ENCODE measurements at regions of chr11 and their contacts with region 1.

Region 1: GRCh38 chr11:44911029-44911814 is 39.5 kb downstream of the TP53I11 start:
- DNase-seq: peak; percentile 87
- ATAC-seq: peak; percentile 89
- H3K4me3 Mint-ChIP-seq: no peak overlapping the region
- H3K27ac Mint-ChIP-seq: no peak overlapping the region
- H3K4me1 Mint-ChIP-seq: peaks cover 3% of the 10 kb centered on the region
- H3K27me3 Mint-ChIP-seq: peaks cover 6% of the 10 kb centered on the region

Region 2: DNA sequence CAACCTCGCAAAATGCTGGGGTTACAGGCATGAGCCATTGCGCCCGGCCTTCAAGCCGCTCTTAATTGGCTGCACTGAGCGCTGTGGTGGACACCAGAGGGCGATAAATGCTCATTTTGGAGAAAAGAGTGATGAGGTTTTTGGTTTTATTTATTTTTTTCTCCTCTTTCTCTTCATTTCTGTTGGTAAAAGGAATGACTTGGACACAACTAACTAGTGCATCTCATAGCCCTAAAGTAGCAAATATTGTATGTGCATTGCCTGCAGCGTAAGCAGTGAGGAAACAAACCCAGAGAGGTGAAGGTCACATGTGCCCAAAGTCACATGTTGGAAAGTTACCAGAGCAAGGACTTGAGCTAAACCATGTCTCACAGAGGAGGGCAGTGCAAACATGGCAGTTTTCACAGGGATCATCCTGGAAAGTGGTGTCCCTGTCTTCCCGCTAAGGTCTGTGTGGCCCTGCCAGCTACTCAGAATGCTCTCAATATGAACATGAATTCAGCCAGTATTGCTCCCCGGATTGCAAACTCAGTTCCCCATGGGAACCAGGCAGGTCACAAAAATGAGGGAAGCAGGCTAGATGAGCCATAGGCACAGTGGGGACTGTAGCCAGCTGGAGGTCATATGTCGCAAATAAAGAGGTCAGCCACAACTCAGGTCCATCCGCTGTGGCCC is 354.4 kb before region 1 on chr11:
- CTCF ChIA-PET with region 1: interaction called, 12 read pairs
- DNase-seq: peak; percentile 80
- ATAC-seq: peak; percentile 65
- H3K4me3 Mint-ChIP-seq: no peak overlapping the region
- H3K27ac Mint-ChIP-seq: no peak overlapping the region
- H3K4me1 Mint-ChIP-seq: peaks cover 26% of the 10 kb centered on the region
- H3K27me3 Mint-ChIP-seq: no peaks in the 10 kb centered on the region

Region 3: DNA sequence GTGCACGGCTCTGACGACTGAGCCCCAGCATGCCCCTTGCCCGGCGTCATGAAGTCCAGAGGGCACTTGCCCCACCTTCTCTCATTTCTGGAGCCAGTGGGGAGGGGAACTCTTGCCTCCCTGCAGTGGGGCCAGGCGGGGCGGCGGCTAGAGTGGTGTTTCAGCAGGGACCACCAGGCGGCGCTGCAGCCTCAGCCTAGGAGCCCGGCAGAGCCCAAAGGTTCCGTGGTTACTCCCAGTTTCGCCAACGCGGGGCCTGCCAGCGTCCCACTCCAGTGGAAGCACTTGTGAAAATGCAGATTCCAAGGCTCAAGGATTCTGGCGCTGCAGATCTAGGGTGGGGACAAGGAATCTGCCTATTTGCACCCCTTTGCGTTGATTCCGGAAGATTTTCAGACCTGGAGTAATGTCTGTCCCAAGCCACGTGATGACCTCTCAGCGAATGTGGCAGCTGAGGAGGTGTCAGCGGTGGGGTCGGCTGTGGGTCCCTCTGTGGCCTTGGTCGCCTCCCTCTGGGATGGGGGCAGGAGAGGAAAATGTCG is 290.0 kb before region 1 on chr11:
- CTCF ChIA-PET with region 1: interaction called, 25 read pairs
- DNase-seq: peak; percentile 68
- ATAC-seq: peak; percentile 66
- H3K4me3 Mint-ChIP-seq: no peak overlapping the region
- H3K27ac Mint-ChIP-seq: no peak overlapping the region
- H3K4me1 Mint-ChIP-seq: peaks cover 6% of the 10 kb centered on the region
- H3K27me3 Mint-ChIP-seq: no peaks in the 10 kb centered on the region

Region 4: DNA sequence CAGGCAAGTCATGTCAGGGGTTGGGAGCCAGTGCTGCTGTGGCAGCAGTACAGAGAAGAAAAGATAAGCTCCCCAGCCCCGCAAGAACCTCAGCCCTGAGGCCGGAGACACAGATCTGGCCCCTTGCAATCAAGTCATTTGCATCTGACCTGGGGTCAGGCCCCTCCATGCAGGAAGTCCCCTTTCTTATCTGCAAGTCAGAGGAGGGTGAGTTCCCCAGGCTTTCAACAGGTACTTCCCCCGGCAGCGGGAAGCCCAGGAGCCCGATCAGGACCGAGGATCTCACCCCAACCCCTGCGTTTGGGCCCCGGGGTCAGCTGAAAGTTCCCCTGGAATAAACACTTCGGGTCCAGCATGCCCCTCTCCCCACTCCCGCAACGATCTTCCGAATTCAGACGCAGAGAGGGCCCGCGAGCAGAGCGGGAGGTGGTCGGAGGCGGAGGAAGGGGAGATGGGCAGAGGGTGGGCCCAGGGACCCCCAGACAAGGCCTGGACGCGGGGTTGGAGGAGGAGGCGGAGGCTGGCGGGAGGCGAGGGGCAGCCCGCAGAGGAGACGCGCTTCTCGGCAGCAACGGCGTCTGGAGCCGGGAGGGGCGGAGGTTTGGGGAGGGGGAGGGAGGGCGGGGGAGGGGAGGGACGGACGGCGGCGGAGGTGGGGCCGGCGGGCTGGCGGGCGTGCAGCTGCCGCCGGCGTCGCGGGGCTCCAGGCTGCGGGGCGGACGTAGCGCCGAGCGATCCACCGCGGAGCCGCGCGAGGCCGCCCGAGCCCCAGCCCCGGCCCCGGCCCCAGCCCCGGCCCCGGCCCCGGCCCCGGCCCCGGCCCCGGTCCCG is 184.7 kb before region 1 on chr11 and contains the start of gene TSPAN18:
- CTCF ChIA-PET with region 1: interaction called, 12 read pairs
- DNase-seq: no peak
- ATAC-seq: peak; percentile 54
- H3K4me3 Mint-ChIP-seq: peak within 1 kb of the TSS; percentile 71
- H3K27ac Mint-ChIP-seq: no peak within 1 kb of the TSS
- H3K4me1 Mint-ChIP-seq: peaks cover 31% of the 10 kb centered on the region
- H3K27me3 Mint-ChIP-seq: peaks cover 49% of the 10 kb centered on the region
- total RNA-seq, gene TSPAN18: 3.8 to 6.1 TPM

Region 5: DNA sequence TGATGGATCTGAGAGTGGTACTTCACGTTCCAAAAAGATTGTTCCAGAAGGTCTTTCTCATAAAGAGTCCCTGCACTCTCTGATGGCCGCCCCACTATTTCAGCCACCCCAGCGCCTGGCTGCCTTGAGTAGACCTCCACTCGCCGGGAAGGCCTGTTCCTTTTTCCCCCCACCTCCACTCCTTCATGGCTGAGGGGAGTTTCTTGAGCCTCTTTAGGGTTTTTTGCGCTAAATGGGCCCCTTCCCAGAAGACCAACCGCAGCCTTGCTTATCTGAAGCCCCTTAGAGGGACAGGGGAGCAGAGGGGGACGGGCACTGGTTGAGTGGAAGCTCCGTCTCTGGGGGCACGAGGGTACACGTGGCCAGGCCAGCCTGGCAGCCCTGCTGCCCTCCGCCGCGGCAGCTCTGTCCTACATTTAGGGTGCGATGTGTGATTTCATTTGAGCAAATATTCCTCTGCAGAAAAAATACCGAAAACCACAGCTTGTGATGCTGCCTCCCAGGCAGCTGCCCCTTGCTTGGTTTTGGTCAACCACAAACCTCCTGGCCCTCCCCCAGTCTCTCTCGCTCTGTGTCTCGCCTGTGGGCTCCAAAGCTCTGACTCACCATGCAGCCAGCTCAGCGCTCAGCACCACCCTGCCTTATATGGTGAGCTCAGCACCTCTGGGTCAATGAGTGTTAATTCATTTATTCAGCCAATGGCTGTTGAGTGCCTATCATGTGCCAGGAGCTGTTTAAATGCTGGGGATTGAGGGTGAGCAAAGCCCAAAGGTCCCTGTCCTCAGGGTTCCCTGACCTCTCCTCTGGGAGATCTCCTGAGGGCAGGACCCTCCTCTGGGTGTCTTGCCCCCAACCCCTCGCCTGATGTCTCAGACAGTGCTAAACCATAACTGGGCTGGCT is 49.1 kb before region 1 on chr11:
- CTCF ChIA-PET with region 1: interaction called, 12 read pairs
- DNase-seq: peak; percentile 96
- ATAC-seq: peak; percentile 99
- H3K4me3 Mint-ChIP-seq: peak overlapping the region; percentile 33
- H3K27ac Mint-ChIP-seq: peak overlapping the region; percentile 85
- H3K4me1 Mint-ChIP-seq: peaks cover 24% of the 10 kb centered on the region
- H3K27me3 Mint-ChIP-seq: peaks cover 71% of the 10 kb centered on the region

Region 6: GRCh38 chr11:44899959-44900358 is 11.3 kb before region 1 on chr11:
- CTCF ChIA-PET with region 1: interaction called, 15 read pairs
- DNase-seq: no peak
- ATAC-seq: peak; percentile 47
- H3K4me3 Mint-ChIP-seq: no peak overlapping the region
- H3K27ac Mint-ChIP-seq: no peak overlapping the region
- H3K4me1 Mint-ChIP-seq: no peaks in the 10 kb centered on the region
- H3K27me3 Mint-ChIP-seq: peaks cover 5% of the 10 kb centered on the region

Region 7: DNA sequence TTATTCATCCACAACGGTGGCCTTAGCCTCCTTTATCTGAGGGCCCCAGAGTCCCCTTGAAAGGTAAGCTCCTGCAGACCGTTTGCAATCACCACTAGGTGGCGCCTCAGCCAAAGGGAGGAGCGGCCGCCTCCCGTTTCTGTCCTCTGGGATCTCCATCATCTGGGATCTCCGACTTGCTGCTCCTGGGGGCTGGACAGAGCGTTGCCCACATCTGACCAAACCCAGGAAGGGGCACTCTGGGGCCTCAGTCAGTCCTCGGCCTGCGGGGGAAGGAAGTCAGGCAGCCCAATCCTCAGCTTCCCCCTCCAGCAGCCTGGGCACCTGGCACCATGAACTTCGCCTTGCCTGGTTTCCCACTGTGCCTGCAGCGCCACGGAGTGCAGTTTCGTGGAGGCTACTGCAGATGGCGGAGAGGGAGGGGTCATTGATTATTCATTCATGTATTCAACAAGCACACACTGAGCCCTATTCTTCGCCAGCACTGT is 16.0 kb after region 1 on chr11:
- CTCF ChIA-PET with region 1: interaction called, 17 read pairs
- DNase-seq: peak; percentile 63
- ATAC-seq: peak; percentile 71
- H3K4me3 Mint-ChIP-seq: no peak overlapping the region
- H3K27ac Mint-ChIP-seq: no peak overlapping the region
- H3K4me1 Mint-ChIP-seq: no peaks in the 10 kb centered on the region
- H3K27me3 Mint-ChIP-seq: no peaks in the 10 kb centered on the region